ACHN (cell line): ENCODE measurements at regions of chr11 and their contacts with region 1.

Region 1: GRCh38 chr11:123261345-123262106 is 66.5 kb upstream of the CLMP start:
- DNase-seq: peak; percentile 75

Region 2: GRCh38 chr11:123103326-123103980 is 158.1 kb before region 1 on chr11:
- in situ Hi-C with region 1: loop called (anchors 10 kb)
- DNase-seq: peak; percentile 52

Region 3: DNA sequence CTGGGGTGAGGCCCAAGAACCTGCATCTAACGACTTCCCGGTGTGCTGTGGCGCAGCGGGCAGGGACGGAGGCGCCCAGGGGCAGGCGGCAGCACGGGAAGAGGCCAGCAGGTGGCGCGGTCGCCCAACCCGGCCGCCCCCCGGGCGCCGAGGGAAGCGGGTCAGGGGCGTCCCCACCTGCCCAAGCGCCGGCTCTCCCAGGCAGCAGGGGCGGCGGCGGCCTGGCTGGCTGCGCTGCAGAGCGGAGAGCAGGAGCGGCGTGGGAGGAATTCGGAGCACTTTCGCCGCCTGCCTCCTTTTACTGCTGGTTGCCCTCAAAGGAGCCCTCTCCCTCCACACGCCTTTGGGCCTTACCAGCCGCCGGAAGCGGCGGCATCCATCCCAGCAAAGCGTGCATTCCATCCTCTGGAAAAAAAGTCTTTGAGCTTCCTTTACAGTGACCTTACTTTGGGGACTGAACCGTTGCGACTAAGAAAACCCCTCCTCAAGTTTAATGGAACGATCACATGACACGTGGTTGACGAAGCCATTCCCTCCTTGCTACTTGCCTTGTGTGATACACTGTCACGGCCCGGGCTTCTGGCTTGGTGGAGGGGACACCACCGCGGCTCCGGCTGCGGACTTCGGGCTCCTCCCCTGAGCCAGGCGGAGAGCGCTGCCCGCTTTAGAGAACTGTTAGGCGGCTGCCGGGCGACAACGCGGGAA is 40.3 kb after region 1 on chr11:
- in situ Hi-C with region 1: no loop called
- DNase-seq: peak; percentile 41

Region 4: GRCh38 chr11:123707606-123708205 is 446.2 kb after region 1 on chr11:
- in situ Hi-C with region 1: no loop called
- DNase-seq: peak; percentile 57